Naive thymus-derived CD4-positive, alpha-beta T cell (primary cell): ENCODE measurements at regions of chr6 and their contacts with region 1.

Region 1: GRCh38 chr6:21873562-21873961 is 280.0 kb downstream of the SOX4 start:
- DNase-seq: no peak
- ATAC-seq: no peak
- H3K4me3 ChIP-seq: no peak overlapping the region
- H3K4me3 Mint-ChIP-seq: peak overlapping the region in 1 of 10 donors; percentile 45
- H3K27ac ChIP-seq: no peak overlapping the region
- H3K27ac Mint-ChIP-seq: no peak overlapping the region
- H3K4me1 ChIP-seq: no peaks in the 10 kb centered on the region
- H3K4me1 Mint-ChIP-seq: peaks cover 0 to 34% (median 14%) of the 10 kb centered on the region in 7 donors
- H3K27me3 ChIP-seq: no peaks in the 10 kb centered on the region
- H3K27me3 Mint-ChIP-seq: peaks cover 0 to 8% (median 0%) of the 10 kb centered on the region in 5 donors

Region 2: GRCh38 chr6:21816231-21816630 is 57.3 kb before region 1 on chr6:
- CTCF ChIA-PET with region 1: no interaction called
- POLR2A ChIA-PET with region 1: no interaction called
- intact Hi-C with region 1: no loop called
- DNase-seq: no peak
- ATAC-seq: no peak
- H3K4me3 ChIP-seq: no peak overlapping the region
- H3K4me3 Mint-ChIP-seq: no peak overlapping the region
- H3K27ac ChIP-seq: no peak overlapping the region
- H3K27ac Mint-ChIP-seq: no peak overlapping the region
- H3K4me1 ChIP-seq: no peaks in the 10 kb centered on the region
- H3K4me1 Mint-ChIP-seq: peaks cover 0 to 2% (median 0%) of the 10 kb centered on the region in 7 donors
- H3K27me3 ChIP-seq: no peaks in the 10 kb centered on the region
- H3K27me3 Mint-ChIP-seq: peaks cover 0 to 4% (median 0%) of the 10 kb centered on the region in 5 donors

Region 3: GRCh38 chr6:21914121-21914973 is 40.8 kb after region 1 on chr6:
- CTCF ChIA-PET with region 1: no interaction called
- POLR2A ChIA-PET with region 1: no interaction called
- intact Hi-C with region 1: loop called in 1 of 2 experiments (anchors 2 kb)
- DNase-seq: peak in 7 of 9 donors; percentile 20 to 65 (median 38)
- ATAC-seq: peak; percentile 36
- H3K4me3 ChIP-seq: no peak overlapping the region
- H3K4me3 Mint-ChIP-seq: peak overlapping the region; percentile 11 to 80 (median 66)
- H3K27ac ChIP-seq: peak overlapping the region; percentile 6
- H3K27ac Mint-ChIP-seq: peak overlapping the region; percentile 10 to 90 (median 77)
- H3K4me1 ChIP-seq: peaks cover 0 to 4% of the 10 kb centered on the region in 2 donors
- H3K4me1 Mint-ChIP-seq: peaks cover 8 to 44% (median 28%) of the 10 kb centered on the region in 7 donors
- H3K27me3 ChIP-seq: no peaks in the 10 kb centered on the region
- H3K27me3 Mint-ChIP-seq: peaks cover 0 to 13% (median 1%) of the 10 kb centered on the region in 5 donors

Region 4: GRCh38 chr6:21928827-21929226 is 55.3 kb after region 1 on chr6:
- CTCF ChIA-PET with region 1: no interaction called
- POLR2A ChIA-PET with region 1: no interaction called
- intact Hi-C with region 1: loop called in 1 of 2 experiments (anchors 2 kb)
- DNase-seq: no peak
- ATAC-seq: no peak
- H3K4me3 ChIP-seq: no peak overlapping the region
- H3K4me3 Mint-ChIP-seq: no peak overlapping the region
- H3K27ac ChIP-seq: no peak overlapping the region
- H3K27ac Mint-ChIP-seq: peak overlapping the region in 1 of 9 donors; percentile 80
- H3K4me1 ChIP-seq: no peaks in the 10 kb centered on the region
- H3K4me1 Mint-ChIP-seq: peaks cover 0 to 33% (median 9%) of the 10 kb centered on the region in 7 donors
- H3K27me3 ChIP-seq: no peaks in the 10 kb centered on the region
- H3K27me3 Mint-ChIP-seq: peaks cover 0 to 3% (median 0%) of the 10 kb centered on the region in 5 donors

Region 5: GRCh38 chr6:22145823-22146677 is 272.5 kb after region 1 on chr6:
- CTCF ChIA-PET with region 1: no interaction called
- POLR2A ChIA-PET with region 1: no interaction called
- intact Hi-C with region 1: no loop called
- DNase-seq: peak in 7 of 9 donors; percentile 5 to 50 (median 22)
- ATAC-seq: peak; percentile 16
- H3K4me3 ChIP-seq: no peak overlapping the region
- H3K4me3 Mint-ChIP-seq: peak overlapping the region in 9 of 10 donors; percentile 72 to 90 (median 81)
- H3K27ac ChIP-seq: peak overlapping the region; percentile 61
- H3K27ac Mint-ChIP-seq: peak overlapping the region in 5 of 9 donors; percentile 49 to 95 (median 91)
- H3K4me1 ChIP-seq: peaks cover 0 to 5% of the 10 kb centered on the region in 2 donors
- H3K4me1 Mint-ChIP-seq: peaks cover 5 to 58% (median 24%) of the 10 kb centered on the region in 7 donors
- H3K27me3 ChIP-seq: no peaks in the 10 kb centered on the region
- H3K27me3 Mint-ChIP-seq: peaks cover 28 to 51% (median 34%) of the 10 kb centered on the region in 5 donors

Region 6: GRCh38 chr6:22236626-22237414 is 363.3 kb after region 1 on chr6:
- CTCF ChIA-PET with region 1: no interaction called
- POLR2A ChIA-PET with region 1: no interaction called
- intact Hi-C with region 1: no loop called
- DNase-seq: no peak
- ATAC-seq: no peak
- H3K4me3 ChIP-seq: no peak overlapping the region
- H3K4me3 Mint-ChIP-seq: no peak overlapping the region
- H3K27ac ChIP-seq: no peak overlapping the region
- H3K27ac Mint-ChIP-seq: no peak overlapping the region
- H3K4me1 ChIP-seq: no peaks in the 10 kb centered on the region
- H3K4me1 Mint-ChIP-seq: no peaks in the 10 kb centered on the region
- H3K27me3 ChIP-seq: no peaks in the 10 kb centered on the region
- H3K27me3 Mint-ChIP-seq: no peaks in the 10 kb centered on the region